Heart right ventricle (tissue), 16 donors: ENCODE measurements at regions of chr2 and their contacts with region 1.

Region 1: DNA sequence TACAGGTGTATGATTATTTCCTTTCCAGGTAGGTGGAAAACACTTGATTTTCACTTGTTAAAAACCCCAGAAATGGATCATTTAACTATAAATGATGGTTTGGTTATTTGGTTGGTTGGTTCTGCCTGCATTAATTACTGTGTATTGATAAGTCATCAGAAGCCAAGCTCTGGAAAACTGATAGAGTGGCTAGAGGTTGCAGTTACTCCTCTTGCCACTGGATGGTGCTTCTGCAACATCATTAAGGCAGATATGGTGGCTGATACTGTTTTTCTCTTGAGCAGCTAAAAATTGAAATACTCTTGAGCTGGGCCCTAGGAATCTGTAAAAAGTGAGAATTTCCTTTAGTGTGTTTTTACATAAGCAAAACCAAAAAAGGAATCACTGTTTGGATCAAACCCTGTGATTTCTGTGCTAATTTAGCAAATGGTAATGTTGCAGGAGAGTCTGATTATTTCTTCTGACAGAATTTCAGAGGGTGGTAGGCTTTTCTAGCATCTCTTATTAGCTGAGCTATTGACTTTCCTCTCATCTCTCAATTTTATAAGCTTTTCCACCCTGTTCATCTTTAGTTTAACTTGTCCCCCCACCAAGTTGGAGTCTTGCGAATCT is 54.3 kb downstream of the RAB10 start:
- DNase-seq: no peak
- ATAC-seq: peak in 3 of 8 donors; percentile 49 to 60 (median 54)
- H3K4me3 ChIP-seq: no peak overlapping the region
- H3K27ac ChIP-seq: no peak overlapping the region
- H3K4me1 ChIP-seq: peaks cover 0 to 65% (median 16%) of the 10 kb centered on the region in 9 donors
- H3K27me3 ChIP-seq: no peaks in the 10 kb centered on the region
- CTCF ChIP-seq: peak; percentile 28 to 78 (median 70)

Region 2: DNA sequence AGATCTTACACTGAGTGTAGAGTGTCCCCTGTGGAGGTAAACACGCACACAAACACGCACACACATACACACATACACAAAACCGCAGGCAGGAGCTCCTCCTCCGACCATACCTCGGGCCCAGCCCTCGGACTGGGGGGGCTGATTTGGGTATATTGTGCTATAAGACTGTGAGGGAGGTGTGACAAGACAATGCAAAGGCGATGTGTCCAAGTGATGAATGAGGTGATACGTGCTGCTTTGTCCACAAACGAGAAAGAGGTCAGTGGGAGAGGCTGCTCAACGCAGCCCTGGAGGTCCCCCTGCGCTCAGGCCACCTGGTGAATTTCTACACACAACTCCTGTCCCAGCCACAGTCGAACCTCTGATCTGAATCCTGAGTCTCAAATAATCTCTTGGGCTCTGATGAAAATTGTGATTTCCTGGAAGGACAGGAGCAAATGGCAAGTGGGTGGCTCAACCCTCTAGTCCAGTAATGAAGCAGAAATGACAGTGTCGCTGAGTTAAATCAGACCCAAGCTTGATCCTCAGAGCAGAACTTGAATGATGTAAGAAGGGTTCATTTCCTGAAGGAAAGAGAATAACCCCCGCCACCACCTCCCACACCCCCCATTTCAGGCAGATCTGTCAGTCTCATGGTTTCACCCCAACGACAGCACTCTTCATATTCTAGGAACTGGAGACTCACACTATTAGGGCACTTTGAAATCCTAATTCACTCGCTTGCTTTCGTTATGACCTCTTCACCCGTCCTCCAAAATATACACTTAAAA is 161.0 kb before region 1 on chr2:
- intact Hi-C with region 1: no loop called
- DNase-seq: no peak
- ATAC-seq: no peak
- H3K4me3 ChIP-seq: no peak overlapping the region
- H3K27ac ChIP-seq: no peak overlapping the region
- H3K4me1 ChIP-seq: no peaks in the 10 kb centered on the region
- H3K27me3 ChIP-seq: no peaks in the 10 kb centered on the region
- CTCF ChIP-seq: no peak

Region 3: DNA sequence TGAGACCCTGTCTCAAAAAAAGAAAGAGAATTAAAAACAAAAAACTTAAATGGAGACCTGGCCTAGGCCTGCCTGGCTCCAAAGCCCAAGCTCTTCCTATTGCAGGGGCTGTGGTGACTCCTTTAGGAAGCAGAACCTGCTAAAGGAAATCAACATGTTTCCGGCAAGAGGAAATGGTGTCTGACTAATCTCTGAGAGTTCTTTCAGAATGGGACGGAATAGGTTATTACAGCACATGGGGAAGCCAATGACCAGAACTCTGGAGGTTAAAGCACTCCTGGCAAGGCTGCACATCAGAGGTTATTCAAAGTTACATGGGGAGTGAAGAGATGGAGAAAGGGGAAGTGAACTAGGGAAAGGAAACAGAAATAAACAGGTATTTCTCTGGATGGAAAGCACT is 127.2 kb before region 1 on chr2:
- intact Hi-C with region 1: no loop called
- DNase-seq: peak in 1 of 2 donors; percentile 49
- ATAC-seq: peak; percentile 75 to 94 (median 91)
- H3K4me3 ChIP-seq: no peak overlapping the region
- H3K27ac ChIP-seq: peak overlapping the region in 6 of 10 donors; percentile 22 to 63 (median 47)
- H3K4me1 ChIP-seq: peaks cover 0 to 26% (median 18%) of the 10 kb centered on the region in 9 donors
- H3K27me3 ChIP-seq: no peaks in the 10 kb centered on the region
- CTCF ChIP-seq: no peak

Region 4: GRCh38 chr2:26130763-26131162 is 42.6 kb after region 1 on chr2:
- intact Hi-C with region 1: loop called in 1 of 10 experiments (anchors 5 kb)
- DNase-seq: no peak
- ATAC-seq: no peak
- H3K4me3 ChIP-seq: no peak overlapping the region
- H3K27ac ChIP-seq: no peak overlapping the region
- H3K4me1 ChIP-seq: peaks cover 0 to 22% (median 10%) of the 10 kb centered on the region in 9 donors
- H3K27me3 ChIP-seq: no peaks in the 10 kb centered on the region
- CTCF ChIP-seq: no peak